Head of caudate nucleus (tissue), 42 donors: ENCODE measurements at regions of chr3 and their contacts with region 1.

Region 1: DNA sequence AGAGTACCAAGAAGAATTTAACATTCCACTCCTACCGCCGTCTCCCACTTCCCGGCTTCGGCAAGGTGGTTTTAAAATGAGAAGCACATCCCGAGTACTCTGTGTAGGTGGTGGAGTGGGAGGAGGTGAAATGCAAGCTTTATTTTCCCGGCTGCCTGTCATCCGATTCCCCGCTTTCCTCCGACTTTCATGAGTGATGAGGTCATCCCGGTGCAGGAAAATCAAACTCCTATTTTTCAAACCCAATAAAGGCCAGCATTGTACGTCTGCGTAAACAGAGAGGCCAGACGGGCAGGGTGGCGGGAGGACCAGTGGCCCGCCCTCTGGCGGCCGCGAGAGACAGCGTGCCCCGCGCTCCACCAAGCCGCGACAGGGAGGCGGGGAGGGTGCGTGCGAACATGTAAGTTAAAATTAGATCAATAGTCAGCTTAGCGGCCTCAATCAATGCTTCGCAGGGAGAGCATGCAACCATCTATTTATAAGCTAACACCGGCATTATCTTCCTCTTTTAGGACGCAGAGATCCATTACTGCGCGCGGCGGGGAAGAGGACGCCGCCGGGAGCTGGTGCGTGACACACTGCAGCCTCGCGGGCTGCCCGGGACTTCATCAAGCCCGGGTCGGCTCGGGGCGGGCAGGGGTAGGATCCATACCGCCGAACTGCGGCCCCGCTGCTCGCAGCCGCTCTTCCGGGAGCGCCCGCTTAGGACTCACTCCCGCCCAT is 163.3 kb downstream of the CD47 start:
- DNase-seq: peak; percentile 78 to 95 (median 88)

Region 2: DNA sequence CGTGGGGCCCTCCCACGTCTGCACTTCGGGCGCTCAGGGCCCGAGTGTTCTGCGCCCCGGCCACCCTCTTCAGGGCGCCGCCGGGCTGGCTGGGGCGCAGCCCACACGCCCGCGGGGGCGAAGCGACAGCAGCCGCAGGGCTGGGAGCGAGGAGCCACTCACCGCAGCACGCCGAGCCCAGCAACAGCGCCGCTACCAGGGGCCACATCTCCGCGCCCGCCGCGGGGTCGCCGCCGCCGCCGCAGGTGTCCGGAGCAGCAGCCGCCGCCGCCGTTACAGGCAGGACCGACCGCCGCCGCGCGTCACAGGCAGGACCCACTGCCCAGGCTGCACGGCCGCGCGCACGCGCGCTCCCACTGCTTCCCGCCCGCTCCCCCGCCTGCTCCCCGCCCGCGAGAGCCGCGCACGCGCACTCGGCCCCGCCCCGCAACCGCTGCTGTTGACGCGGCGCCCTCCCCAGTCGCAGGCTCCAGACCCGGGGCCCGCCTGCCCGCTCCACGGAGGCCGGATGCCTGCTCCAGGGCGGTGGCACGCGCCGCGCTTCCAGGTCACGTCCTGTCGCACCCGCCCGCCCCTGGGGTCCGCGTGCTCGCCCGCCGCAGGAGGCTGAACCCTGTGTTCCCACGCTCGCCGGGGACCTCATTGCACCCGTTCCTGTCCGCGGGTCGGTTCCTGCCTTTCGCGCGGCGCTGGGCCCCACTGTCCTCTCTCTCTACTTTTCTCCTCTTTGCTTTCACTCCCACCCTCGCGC is 163.4 kb after region 1 on chr3 and contains the start of gene CD47:
- intact Hi-C with region 1: loop called (anchors 5 kb)
- DNase-seq: peak; percentile 81 to 98 (median 96)